ENCODE measurements at regions of chr11 and their contacts with region 1.

Region 1: DNA sequence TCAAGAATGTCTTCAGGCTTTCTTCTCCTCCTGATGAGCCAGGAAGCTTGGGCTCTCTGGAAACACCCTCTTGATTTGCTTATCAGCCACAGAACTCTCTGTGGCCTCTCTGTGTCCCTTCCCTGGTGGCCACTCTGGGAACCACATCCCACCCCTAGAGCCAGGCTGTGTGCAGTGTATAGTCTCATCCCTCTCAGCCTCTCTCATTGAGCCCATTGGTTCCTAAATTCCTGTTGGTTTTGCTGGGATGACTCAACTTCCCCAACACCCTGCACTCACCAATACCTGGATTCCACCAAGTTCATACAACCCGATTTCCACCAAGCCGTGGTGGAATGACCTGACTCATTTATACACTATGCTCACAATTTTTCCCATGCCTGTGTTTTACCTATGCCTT is 5.2 kb downstream of the IRAG1 start:
- DNase-seq: peak; percentile 90
- H3K4me3 ChIP-seq: no peak overlapping the region
- H3K27ac ChIP-seq: no peak overlapping the region
- H3K4me1 ChIP-seq: peaks cover 13% of the 10 kb centered on the region
- H3K27me3 ChIP-seq: no peaks in the 10 kb centered on the region
- CTCF ChIP-seq: peak; percentile 41 to 50

Region 2: GRCh38 chr11:10405855-10406592 is 282.4 kb before region 1 on chr11:
- CTCF ChIA-PET with region 1: no interaction called
- dilution Hi-C with region 1: no loop called
- in situ Hi-C with region 1: no loop called
- intact Hi-C with region 1: no loop called
- DNase-seq: peak; percentile 68
- H3K4me3 ChIP-seq: no peak overlapping the region
- H3K27ac ChIP-seq: peak overlapping the region; percentile 15
- H3K4me1 ChIP-seq: peaks cover 19% of the 10 kb centered on the region
- H3K27me3 ChIP-seq: no peaks in the 10 kb centered on the region
- CTCF ChIP-seq: peak; percentile 77 to 80

Region 3: DNA sequence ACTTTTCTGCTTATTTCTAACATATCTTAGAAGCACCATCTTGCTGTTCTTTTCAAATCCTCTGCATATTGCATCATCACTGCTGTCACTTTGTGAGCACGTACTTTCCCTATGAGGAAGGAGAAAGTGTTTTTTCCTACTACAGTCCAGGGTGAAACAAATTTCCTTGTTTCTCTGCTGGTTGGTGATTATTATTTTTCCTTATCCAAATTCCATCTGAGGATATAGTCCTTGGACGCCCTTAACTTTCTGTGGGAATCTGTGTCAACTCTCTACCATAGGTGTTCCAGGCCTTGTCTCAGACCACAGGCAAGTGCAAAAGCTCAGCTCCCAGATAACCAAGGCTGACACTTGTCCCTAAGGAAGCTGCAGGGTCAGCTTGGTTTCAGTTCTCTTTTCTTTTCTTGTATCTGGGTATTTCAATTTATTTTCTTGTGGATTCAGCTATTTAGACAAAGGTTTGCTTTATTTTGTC is 90.5 kb before region 1 on chr11:
- CTCF ChIA-PET with region 1: interaction called, 3 read pairs
- dilution Hi-C with region 1: loop called (anchors 5 kb)
- in situ Hi-C with region 1: no loop called
- intact Hi-C with region 1: no loop called
- DNase-seq: no peak
- H3K4me3 ChIP-seq: no peak overlapping the region
- H3K27ac ChIP-seq: no peak overlapping the region
- H3K4me1 ChIP-seq: peaks cover 25% of the 10 kb centered on the region
- H3K27me3 ChIP-seq: no peaks in the 10 kb centered on the region
- CTCF ChIP-seq: no peak